WTC11 (cell line): ENCODE measurements at regions of chr20 and their contacts with region 1.

Region 1: DNA sequence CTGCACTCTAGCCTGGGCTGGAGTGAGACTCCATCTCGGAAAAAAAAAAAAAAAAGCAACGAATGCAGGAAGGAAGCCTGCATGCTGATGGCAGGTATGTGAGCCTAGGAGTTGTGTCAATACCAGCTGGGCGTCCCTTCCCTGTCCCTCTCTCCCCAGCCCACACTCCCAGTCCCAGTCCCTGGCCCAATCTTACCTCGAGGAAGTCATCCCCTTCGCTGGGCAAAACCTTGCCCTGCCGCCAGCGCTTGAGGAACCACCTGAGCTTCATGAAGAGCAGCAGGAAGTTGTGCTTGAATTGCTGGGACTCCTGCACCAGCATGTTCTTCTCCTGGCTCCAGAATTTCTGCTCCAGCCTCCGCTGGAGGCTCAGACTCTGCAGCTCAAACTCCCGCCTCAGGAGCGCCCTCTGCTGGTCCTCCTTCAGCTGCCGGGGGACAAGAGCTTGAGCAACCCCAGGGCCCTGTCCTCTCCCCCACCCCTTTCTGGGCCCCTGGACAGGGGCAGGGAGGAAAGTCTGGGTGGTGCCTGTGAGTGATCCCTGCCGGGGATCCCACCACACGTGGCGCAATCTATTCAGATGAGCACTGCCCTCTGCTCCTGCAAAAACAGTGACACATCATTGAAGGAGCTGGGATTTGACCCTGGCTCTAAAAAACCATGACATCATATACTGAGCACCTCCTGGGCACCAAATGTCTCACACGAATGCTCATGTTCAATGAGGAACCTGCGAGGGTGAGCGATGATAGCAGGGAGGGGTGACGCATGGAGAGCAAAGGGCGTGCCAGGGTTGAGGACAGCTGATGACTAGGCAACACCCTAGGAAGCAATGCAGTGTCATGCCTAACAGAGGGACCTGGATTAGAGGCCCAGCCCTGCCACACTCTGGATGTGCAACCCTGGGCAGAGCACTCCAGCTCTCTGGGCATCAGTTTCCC is 35.0 kb upstream of the DSN1 start:
- DNase-seq: peak; percentile 84
- ATAC-seq: peak; percentile 74
- H3K4me3 Mint-ChIP-seq: no peak overlapping the region
- H3K27ac Mint-ChIP-seq: peak overlapping the region; percentile 79
- H3K4me1 Mint-ChIP-seq: no peaks in the 10 kb centered on the region
- H3K27me3 Mint-ChIP-seq: no peaks in the 10 kb centered on the region
- CTCF ChIP-seq: peak; percentile 93

Region 2: DNA sequence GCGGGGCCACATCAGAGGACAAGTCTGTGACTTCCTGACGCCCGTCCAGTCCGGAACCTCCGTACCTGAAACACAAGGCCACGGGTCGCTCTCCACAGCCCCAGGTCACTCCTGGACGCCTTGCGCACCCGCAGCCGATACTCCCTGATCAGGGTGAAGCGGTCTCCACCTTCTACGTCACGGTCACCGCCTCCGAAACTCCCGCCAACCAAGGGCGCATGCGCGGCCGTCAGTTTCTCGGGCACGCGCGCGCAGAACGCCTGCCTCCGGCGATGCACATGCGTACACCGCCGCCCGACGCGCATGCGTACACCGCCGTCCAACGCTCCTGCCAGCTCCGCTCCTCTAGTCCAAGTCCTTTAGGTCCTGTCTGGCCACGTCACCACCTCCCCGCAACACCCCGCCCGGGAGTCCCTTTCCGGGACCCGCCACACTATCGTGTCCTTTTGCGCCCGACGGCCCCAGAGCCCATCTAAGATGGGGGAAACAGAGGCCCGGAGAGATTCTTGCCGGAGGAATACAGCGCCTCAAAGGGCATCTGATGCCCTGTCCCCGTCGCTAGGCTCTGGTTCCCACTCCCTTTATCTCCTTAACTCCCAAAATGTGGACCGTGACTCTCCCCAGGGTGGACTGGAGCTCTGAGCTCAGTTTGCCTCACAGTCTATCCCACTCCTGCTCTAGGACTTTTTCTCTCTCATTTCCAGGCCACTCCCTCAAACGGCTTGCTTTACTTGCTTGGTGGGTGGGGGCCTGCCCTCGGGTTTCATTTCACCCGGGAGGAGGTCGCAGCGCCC is 34.8 kb before region 1 on chr20 and contains the start of gene DSN1:
- CTCF ChIA-PET with region 1: interaction called, 13 read pairs
- POLR2A ChIA-PET with region 1: no interaction called
- DNase-seq: peak; percentile 99
- ATAC-seq: peak; percentile 80
- H3K4me3 Mint-ChIP-seq: peak within 1 kb of the TSS; percentile 90
- H3K27ac Mint-ChIP-seq: peak within 1 kb of the TSS; percentile 100
- H3K4me1 Mint-ChIP-seq: peaks cover 7% of the 10 kb centered on the region
- H3K27me3 Mint-ChIP-seq: peaks cover 2% of the 10 kb centered on the region; the same call in 1 of the 2 replicates
- CTCF ChIP-seq: no peak
- total RNA-seq, gene DSN1: 26.0 to 27.0 TPM (median 26.9 TPM) in 3 replicates

Region 3: DNA sequence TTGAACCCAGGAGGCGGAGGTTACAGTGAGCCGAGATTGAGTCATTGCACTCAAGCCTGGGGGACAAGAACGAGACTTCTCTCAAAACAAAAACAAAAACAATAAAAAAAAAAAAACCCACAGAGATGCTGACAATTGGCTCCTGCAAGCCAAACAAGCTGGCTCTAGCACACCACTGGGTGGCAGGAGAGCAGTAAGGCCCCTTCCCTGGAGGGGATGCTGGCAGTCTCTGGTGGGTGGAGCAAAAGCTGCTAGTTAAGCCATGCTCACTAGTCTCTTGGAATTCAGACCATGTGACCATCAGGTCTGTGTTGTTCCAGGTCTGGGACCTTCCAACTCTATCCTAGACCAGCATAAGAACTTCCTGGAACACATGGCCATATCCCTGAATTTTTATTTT is 16.2 kb before region 1 on chr20:
- CTCF ChIA-PET with region 1: interaction called, 41 read pairs
- POLR2A ChIA-PET with region 1: no interaction called
- DNase-seq: peak; percentile 73
- ATAC-seq: peak; percentile 98
- H3K4me3 Mint-ChIP-seq: no peak overlapping the region
- H3K27ac Mint-ChIP-seq: no peak overlapping the region
- H3K4me1 Mint-ChIP-seq: no peaks in the 10 kb centered on the region
- H3K27me3 Mint-ChIP-seq: no peaks in the 10 kb centered on the region
- CTCF ChIP-seq: no peak

Region 4: DNA sequence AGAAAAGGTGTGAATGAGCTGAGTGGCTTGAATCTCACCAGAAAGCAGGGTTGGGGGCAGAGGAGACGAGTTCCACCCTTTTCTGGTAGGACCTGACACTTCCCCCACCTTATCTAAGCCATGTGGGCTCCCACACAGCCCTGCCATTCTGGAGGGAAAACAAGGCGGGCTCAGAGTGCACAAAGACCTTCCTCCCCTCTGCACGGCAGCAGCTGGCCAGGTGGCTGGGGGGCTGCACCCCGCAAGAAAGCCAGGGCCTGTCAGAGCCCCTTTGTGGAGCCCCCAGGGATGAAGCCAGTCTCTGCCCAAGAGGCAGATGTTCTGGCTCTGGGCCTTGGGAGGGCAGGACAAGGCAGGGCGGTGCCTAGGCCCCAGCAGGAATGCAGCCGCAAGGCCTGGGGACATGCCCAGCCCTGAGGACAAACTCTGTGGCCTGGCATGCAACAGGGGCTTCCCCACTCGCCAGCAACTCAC is 13.4 kb after region 1 on chr20:
- CTCF ChIA-PET with region 1: interaction called, 38 read pairs
- POLR2A ChIA-PET with region 1: no interaction called
- DNase-seq: no peak
- ATAC-seq: peak; percentile 46
- H3K4me3 Mint-ChIP-seq: no peak overlapping the region
- H3K27ac Mint-ChIP-seq: peak overlapping the region; percentile 62
- H3K4me1 Mint-ChIP-seq: peaks cover 28% of the 10 kb centered on the region
- H3K27me3 Mint-ChIP-seq: no peaks in the 10 kb centered on the region
- CTCF ChIP-seq: no peak

Region 5: GRCh38 chr20:36847009-36847709 is 38.6 kb after region 1 on chr20:
- CTCF ChIA-PET with region 1: interaction called, 24 read pairs
- POLR2A ChIA-PET with region 1: interaction called, 3 read pairs
- DNase-seq: no peak
- ATAC-seq: no peak
- H3K4me3 Mint-ChIP-seq: no peak overlapping the region
- H3K27ac Mint-ChIP-seq: peak overlapping the region; percentile 24; the same call in 1 of the 2 replicates
- H3K4me1 Mint-ChIP-seq: peaks cover 15% of the 10 kb centered on the region
- H3K27me3 Mint-ChIP-seq: no peaks in the 10 kb centered on the region
- CTCF ChIP-seq: no peak

Region 6: DNA sequence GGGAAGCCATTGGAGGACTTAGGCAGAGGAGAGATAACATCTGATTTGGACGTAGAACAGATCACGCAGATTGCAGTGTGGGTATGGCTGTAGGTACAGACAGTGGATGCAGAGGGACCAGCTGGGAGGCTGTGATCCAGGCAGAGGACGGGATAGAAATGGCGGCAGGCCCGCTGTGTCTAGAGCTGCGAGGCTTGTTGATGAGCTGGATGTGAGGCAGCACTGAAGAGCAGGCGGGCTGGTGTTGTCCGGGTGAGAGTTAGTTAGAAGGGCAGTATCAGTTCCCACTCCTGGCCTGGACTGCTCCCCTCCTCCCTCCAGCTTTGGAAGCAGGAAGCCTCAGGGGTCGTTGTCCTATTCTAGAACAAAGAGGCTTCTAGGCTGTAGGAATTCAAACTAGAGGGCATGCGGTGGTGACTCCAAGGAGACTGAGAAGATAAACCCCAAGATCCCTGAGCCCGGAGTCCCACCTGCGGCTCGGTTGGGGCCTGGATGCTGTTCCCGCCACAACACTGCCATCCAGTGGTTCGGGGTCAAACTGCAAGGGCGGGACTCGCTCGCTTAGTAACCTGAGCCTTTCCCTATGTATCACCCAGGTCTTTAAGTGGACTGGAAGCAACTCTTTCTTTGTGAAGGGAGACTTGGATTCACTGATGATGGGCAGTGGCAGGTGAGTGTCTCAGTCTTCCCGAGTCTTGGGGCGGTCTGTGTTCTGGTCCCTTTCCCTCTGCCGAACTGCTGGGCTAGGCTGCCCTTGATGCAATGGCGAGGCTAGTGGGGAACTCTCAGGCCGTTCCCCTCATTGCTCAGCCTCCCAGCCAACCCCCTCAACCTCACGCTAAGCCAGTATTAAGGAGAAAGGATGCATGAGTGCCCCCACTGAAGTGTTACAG is 78.5 kb after region 1 on chr20:
- CTCF ChIA-PET with region 1: interaction called, 17 read pairs
- POLR2A ChIA-PET with region 1: no interaction called
- DNase-seq: peak; percentile 96
- ATAC-seq: peak; percentile 90
- H3K4me3 Mint-ChIP-seq: peak overlapping the region; percentile 36
- H3K27ac Mint-ChIP-seq: peak overlapping the region; percentile 61
- H3K4me1 Mint-ChIP-seq: peaks cover 20% of the 10 kb centered on the region
- H3K27me3 Mint-ChIP-seq: no peaks in the 10 kb centered on the region; the same call in 1 of the 2 replicates
- CTCF ChIP-seq: peak; percentile 96